Cardiac septum (tissue), 1 donor: ENCODE measurements at regions of chr20 and their contacts with region 1.

Region 1: GRCh38 chr20:31723319-31724078 is 831 bp upstream of the BCL2L1 start:
- DNase-seq: peak; percentile 99

Region 2: GRCh38 chr20:31572701-31573554 is 150.6 kb before region 1 on chr20:
- intact Hi-C with region 1: loop called (anchors 5 kb)
- DNase-seq: peak; percentile 97

Region 3: GRCh38 chr20:31661625-31662371 is 61.7 kb before region 1 on chr20:
- intact Hi-C with region 1: loop called (anchors 1 kb)
- DNase-seq: peak; percentile 93

Region 4: GRCh38 chr20:31698803-31699718 is 24.4 kb before region 1 on chr20:
- intact Hi-C with region 1: loop called (anchors 2 kb)
- DNase-seq: no peak

Region 5: GRCh38 chr20:31712564-31713311 is 10.8 kb before region 1 on chr20:
- intact Hi-C with region 1: loop called (anchors 1 kb)
- DNase-seq: peak; percentile 90